Activated CD4-positive, alpha-beta memory T cell treated with anti-CD3 and anti-CD28 coated beads for 36 hours (primary cell): ENCODE measurements at regions of chr18 and their contacts with region 1.

Region 1: GRCh38 chr18:51110073-51110803 is 80.2 kb downstream of the SMAD4 start:
- DNase-seq: peak; percentile 79
- H3K4me3 Mint-ChIP-seq: no peak overlapping the region
- H3K27ac Mint-ChIP-seq: no peak overlapping the region
- H3K4me1 Mint-ChIP-seq: peaks cover 15% of the 10 kb centered on the region
- H3K27me3 Mint-ChIP-seq: no peaks in the 10 kb centered on the region

Region 2: GRCh38 chr18:50748243-50749229 is 361.7 kb before region 1 on chr18:
- CTCF ChIA-PET with region 1: no interaction called
- POLR2A ChIA-PET with region 1: no interaction called
- intact Hi-C with region 1: no loop called
- DNase-seq: no peak
- H3K4me3 Mint-ChIP-seq: no peak overlapping the region
- H3K27ac Mint-ChIP-seq: no peak overlapping the region
- H3K4me1 Mint-ChIP-seq: no peaks in the 10 kb centered on the region
- H3K27me3 Mint-ChIP-seq: peaks cover 18% of the 10 kb centered on the region

Region 3: DNA sequence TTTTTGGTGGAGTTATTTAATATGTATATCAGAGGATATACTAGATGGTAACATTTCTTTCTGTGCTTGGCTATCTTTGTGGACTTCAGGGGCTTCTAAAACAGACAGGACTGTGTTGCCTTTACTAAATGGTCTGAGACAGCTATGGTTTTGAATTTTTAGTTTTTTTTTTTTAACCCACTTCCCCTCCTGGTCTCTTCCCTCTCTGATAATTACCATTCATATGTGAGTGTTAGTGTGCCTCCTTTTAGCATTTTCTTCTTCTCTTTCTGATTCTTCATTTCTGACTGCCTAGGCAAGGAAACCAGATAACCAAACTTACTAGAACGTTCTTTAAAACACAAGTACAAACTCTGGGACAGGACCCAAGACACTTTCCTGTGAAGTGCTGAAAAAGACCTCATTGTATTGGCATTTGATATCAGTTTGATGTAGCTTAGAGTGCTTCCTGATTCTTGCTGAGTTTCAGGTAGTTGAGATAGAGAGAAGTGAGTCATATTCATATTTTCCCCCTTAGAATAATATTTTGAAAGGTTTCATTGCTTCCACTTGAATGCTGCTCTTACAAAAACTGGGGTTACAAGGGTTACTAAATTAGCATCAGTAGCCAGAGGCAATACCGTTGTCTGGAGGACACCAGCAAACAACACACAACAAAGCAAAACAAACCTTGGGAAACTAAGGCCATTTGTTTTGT is 27.5 kb before region 1 on chr18:
- CTCF ChIA-PET with region 1: no interaction called
- POLR2A ChIA-PET with region 1: no interaction called
- intact Hi-C with region 1: no loop called
- DNase-seq: no peak
- H3K4me3 Mint-ChIP-seq: no peak overlapping the region
- H3K27ac Mint-ChIP-seq: peak overlapping the region; percentile 51
- H3K4me1 Mint-ChIP-seq: peaks cover 15% of the 10 kb centered on the region
- H3K27me3 Mint-ChIP-seq: no peaks in the 10 kb centered on the region

Region 4: DNA sequence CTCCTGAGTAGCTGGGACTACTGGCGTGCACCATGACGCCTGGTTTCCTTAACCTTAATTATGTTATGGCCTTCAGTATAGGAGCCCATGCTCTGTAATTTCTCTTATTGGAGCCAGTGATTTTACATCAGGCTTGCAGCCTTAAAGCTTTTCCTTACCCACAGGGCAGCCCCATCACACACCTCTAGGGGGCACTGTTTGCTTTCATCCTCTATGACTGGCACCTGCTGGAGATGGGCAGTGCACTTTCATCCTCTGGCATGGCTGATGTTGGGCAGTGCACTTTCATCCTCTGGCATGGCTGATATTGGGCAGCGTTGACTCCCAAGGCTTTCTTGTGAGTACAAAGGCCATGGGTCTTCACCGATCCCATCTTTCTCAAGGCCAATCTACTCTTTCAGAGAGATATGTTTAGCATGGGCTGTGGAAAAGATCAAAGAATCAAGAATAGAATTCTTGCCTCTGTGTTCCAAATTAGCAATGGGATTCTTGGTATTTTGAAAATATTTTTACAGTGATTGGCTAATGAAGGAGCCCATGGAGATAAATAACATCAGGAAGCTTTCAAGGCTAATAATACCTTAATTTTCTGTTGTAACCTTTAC is 167.9 kb after region 1 on chr18:
- CTCF ChIA-PET with region 1: interaction called, 13 read pairs
- POLR2A ChIA-PET with region 1: no interaction called
- intact Hi-C with region 1: no loop called
- DNase-seq: peak; percentile 67
- H3K4me3 Mint-ChIP-seq: no peak overlapping the region
- H3K27ac Mint-ChIP-seq: no peak overlapping the region
- H3K4me1 Mint-ChIP-seq: no peaks in the 10 kb centered on the region
- H3K27me3 Mint-ChIP-seq: peaks cover 2% of the 10 kb centered on the region

Region 5: DNA sequence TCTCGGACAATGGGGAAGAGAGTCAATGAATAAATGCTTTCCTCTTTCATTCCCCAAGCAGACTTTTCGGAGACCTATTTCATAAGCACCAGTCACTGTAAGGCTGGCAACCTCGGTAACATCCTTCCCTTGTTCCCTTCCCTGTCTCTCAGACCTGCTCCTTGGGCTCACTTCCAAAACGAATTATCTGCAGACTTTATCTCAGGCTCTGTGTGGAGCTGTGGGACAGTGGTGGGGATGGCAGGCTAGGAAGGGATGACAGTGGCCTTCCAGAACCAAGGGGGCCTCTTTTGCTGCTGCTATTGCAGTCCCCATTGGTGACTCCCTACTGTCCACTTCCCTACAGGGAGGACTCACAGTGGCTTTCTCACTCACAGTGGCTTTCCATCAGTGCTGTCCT is 272.9 kb after region 1 on chr18:
- CTCF ChIA-PET with region 1: interaction called, 32 read pairs
- POLR2A ChIA-PET with region 1: no interaction called
- intact Hi-C with region 1: no loop called
- DNase-seq: no peak
- H3K4me3 Mint-ChIP-seq: no peak overlapping the region
- H3K27ac Mint-ChIP-seq: no peak overlapping the region
- H3K4me1 Mint-ChIP-seq: no peaks in the 10 kb centered on the region
- H3K27me3 Mint-ChIP-seq: no peaks in the 10 kb centered on the region

Region 6: GRCh38 chr18:51390702-51391101 is 280.5 kb after region 1 on chr18:
- CTCF ChIA-PET with region 1: interaction called, 32 read pairs
- POLR2A ChIA-PET with region 1: no interaction called
- intact Hi-C with region 1: loop called (anchors 2 kb)
- DNase-seq: no peak
- H3K4me3 Mint-ChIP-seq: no peak overlapping the region
- H3K27ac Mint-ChIP-seq: no peak overlapping the region
- H3K4me1 Mint-ChIP-seq: no peaks in the 10 kb centered on the region
- H3K27me3 Mint-ChIP-seq: peaks cover 14% of the 10 kb centered on the region

Region 7: DNA sequence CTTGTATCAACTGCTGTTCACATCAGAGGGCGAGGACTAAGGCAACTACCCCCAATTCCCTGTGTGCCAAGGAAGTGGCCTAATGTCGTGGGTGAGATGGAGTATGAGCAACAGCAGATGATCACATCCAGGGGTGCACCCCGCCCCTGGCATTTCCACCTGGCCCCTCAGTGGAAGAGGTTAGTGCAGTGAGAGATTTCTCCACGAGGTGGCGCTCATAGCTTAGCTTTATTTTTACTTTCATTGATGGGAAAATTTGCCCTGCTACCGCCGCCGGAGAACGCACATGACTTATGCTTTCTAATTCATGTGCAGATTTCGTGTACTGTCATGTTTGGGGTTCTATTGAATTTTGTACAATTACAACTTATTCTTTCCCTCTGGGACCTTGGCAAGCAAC is 557.9 kb after region 1 on chr18:
- CTCF ChIA-PET with region 1: interaction called, 10 read pairs
- POLR2A ChIA-PET with region 1: no interaction called
- intact Hi-C with region 1: loop called (anchors 5 kb)
- DNase-seq: peak; percentile 66
- H3K4me3 Mint-ChIP-seq: no peak overlapping the region
- H3K27ac Mint-ChIP-seq: no peak overlapping the region
- H3K4me1 Mint-ChIP-seq: no peaks in the 10 kb centered on the region
- H3K27me3 Mint-ChIP-seq: peaks cover 16% of the 10 kb centered on the region

Region 8: DNA sequence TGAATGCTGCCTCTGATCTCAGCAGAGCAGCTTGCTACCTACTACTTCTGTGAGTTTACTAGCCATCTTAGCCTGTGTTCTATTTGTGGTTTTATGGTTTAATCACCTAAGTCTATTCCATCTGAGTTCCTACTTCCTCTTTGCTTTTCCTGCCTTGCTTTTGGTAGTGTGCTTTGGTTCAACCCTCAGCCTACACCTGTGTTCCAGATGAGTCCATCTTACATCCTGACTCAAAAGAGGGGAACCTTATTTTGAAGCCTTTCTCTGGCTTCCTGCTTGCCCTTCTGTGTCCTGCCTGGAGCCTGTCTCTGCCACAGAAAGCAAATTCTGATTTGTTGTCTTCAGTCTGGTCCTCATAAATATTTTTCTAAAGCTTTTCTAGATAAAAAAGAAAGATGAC is 617.5 kb after region 1 on chr18:
- CTCF ChIA-PET with region 1: no interaction called
- POLR2A ChIA-PET with region 1: no interaction called
- intact Hi-C with region 1: loop called (anchors 10 kb)
- DNase-seq: no peak
- H3K4me3 Mint-ChIP-seq: no peak overlapping the region
- H3K27ac Mint-ChIP-seq: no peak overlapping the region
- H3K4me1 Mint-ChIP-seq: no peaks in the 10 kb centered on the region
- H3K27me3 Mint-ChIP-seq: peaks cover 3% of the 10 kb centered on the region